Dendritic cell treated with granulocyte-macrophage colony-stimulating factor and Interleukin-4, amounts not matched to agents 40 ng/mL and 50 ng/mL, for 4 days (primary cell): ENCODE measurements at regions of chr12 and their contacts with region 1.

Region 1: GRCh38 chr12:47779301-47779942 is 6.4 kb downstream of the SLC48A1 start:
- H3K4me3 Mint-ChIP-seq: no peak overlapping the region
- H3K27ac Mint-ChIP-seq: no peak overlapping the region
- H3K4me1 Mint-ChIP-seq: peaks cover 45% of the 10 kb centered on the region
- H3K27me3 Mint-ChIP-seq: no peaks in the 10 kb centered on the region

Region 2: DNA sequence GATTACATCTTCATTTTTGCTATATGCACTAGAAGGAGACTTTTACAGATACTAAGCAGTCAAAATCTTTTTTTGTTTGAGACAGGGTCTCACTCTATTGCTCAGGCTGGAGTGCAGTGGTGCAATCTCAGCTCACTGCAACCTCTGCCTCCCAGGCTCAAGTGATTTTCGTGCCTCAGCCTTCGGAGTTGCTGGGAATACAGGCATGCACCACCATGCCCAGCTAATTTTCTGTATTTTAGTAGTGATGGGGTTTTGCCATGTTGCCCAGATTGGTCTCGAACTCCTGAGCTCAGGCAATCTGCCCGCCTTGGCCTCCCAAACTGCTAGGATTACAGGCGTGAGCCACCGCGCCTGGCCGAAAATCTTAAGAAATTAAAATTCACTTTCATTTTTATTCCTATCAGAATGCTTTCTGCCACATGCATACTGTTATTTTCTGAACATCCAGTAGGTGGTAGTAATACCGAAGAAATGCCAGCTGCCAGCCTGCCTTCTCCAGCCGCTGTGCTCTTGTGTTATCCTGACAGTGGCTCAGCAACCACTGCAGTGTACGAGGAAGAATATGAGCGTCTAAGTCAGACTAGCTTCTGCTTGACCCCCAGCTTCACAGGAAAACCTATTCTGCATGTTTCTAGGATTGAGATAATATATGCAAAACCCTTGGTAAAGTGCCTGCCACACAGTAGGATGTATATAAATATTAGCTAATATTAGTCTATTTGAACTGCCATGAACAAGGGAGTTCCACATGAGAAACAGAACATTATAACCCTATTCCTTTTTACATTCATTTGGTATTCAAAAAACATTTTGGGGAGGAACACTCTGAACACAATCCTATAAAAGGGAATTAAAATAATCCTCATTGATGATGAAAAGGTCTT is 127.8 kb before region 1 on chr12:
- intact Hi-C with region 1: loop called (anchors 5 kb)
- H3K4me3 Mint-ChIP-seq: no peak overlapping the region
- H3K27ac Mint-ChIP-seq: peak overlapping the region; percentile 60
- H3K4me1 Mint-ChIP-seq: peaks cover 20% of the 10 kb centered on the region
- H3K27me3 Mint-ChIP-seq: no peaks in the 10 kb centered on the region

Region 3: GRCh38 chr12:47715393-47715876 is 64.0 kb before region 1 on chr12:
- intact Hi-C with region 1: loop called (anchors 1 kb)
- H3K4me3 Mint-ChIP-seq: peak overlapping the region; percentile 26
- H3K27ac Mint-ChIP-seq: peak overlapping the region; percentile 68
- H3K4me1 Mint-ChIP-seq: peaks cover 76% of the 10 kb centered on the region
- H3K27me3 Mint-ChIP-seq: peaks cover 4% of the 10 kb centered on the region

Region 4: DNA sequence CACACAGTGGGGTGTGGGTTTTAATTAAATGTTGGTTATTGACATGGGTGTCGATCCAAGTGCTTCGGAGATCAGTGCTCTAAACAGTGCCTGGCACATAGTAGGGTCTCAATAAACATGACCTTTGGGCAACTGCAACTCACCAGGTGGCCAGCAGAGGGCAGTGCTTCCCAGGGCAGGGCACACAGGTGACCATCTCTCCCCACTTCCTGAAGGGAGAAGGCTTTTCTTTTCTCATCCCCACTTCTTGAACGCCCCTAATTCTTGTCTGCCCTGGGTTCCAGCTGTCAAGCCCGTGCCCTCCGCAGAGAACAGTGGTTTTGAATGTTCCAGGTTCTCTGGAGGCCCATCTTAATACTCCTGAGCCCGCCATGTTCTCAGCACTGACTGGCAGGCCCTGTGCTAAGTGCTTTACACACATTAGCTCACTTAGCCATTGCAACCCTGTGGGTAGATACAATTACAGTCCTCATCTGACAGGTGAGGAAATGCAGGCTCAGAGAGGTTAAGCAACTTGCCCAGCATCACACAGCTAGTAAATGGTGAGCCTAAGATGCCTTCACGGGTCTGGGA is 37.1 kb before region 1 on chr12:
- intact Hi-C with region 1: loop called (anchors 1 kb)
- H3K4me3 Mint-ChIP-seq: no peak overlapping the region
- H3K27ac Mint-ChIP-seq: no peak overlapping the region
- H3K4me1 Mint-ChIP-seq: peaks cover 33% of the 10 kb centered on the region
- H3K27me3 Mint-ChIP-seq: peaks cover 48% of the 10 kb centered on the region

Region 5: GRCh38 chr12:47758834-47759690 is 20.4 kb before region 1 on chr12 and contains the start of gene RAPGEF3:
- intact Hi-C with region 1: loop called (anchors 2 kb)
- H3K4me3 Mint-ChIP-seq: peak within 1 kb of the TSS; percentile 79
- H3K27ac Mint-ChIP-seq: peak within 1 kb of the TSS; percentile 75
- H3K4me1 Mint-ChIP-seq: peaks cover 43% of the 10 kb centered on the region
- H3K27me3 Mint-ChIP-seq: peaks cover 29% of the 10 kb centered on the region

Region 6: GRCh38 chr12:48078901-48079300 is 299.5 kb after region 1 on chr12:
- intact Hi-C with region 1: no loop called
- H3K4me3 Mint-ChIP-seq: no peak overlapping the region
- H3K27ac Mint-ChIP-seq: no peak overlapping the region
- H3K4me1 Mint-ChIP-seq: peaks cover 5% of the 10 kb centered on the region
- H3K27me3 Mint-ChIP-seq: no peaks in the 10 kb centered on the region